Caco-2 (cell line): ENCODE measurements at regions of chr2 and their contacts with region 1.

Region 1: DNA sequence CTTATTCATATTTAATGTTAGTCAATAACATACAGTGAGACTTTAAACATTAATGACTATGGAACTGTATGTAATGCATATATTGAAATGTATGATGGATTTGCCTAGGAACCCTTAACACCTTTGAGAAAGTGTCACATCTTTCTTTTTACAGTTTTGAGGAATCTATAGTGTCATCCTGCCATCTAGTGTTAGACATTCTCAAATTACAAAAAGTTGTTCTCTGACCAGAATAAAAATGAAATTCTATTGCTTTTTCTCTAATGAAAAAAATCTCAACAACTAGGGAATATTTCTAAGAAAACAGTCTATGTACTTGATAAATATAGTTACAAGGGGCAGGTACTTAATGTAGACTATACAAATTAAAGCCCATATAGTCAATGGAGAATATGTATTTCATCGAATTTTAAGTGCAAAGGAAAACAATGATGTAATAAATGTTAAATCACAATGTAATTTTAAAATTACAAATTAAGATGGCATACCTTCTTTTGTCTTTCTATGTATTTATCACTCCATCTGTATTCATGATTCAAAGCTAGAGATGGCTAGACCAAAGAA is 5.1 kb upstream of the CALCRL start:
- DNase-seq: peak in 1 of 2 experiments; percentile 13
- H3K4me3 ChIP-seq: no peak overlapping the region
- H3K4me3 Mint-ChIP-seq: no peak overlapping the region
- H3K27ac Mint-ChIP-seq: no peak overlapping the region
- H3K4me1 ChIP-seq: no peaks in the 10 kb centered on the region
- H3K4me1 Mint-ChIP-seq: no peaks in the 10 kb centered on the region
- H3K27me3 ChIP-seq: no peaks in the 10 kb centered on the region; the same call in 1 of the 2 replicates
- H3K27me3 Mint-ChIP-seq: no peaks in the 10 kb centered on the region
- CTCF ChIP-seq: peak; percentile 25 to 39

Region 2: GRCh38 chr2:186862869-186863709 is 590.1 kb before region 1 on chr2:
- CTCF ChIA-PET with region 1: interaction called, 4 read pairs
- POLR2A ChIA-PET with region 1: no interaction called
- intact Hi-C with region 1: loop called (anchors 1 kb)
- DNase-seq: peak in 1 of 2 experiments; percentile 24
- H3K4me3 ChIP-seq: no peak overlapping the region
- H3K4me3 Mint-ChIP-seq: no peak overlapping the region
- H3K27ac Mint-ChIP-seq: no peak overlapping the region
- H3K4me1 ChIP-seq: no peaks in the 10 kb centered on the region
- H3K4me1 Mint-ChIP-seq: no peaks in the 10 kb centered on the region
- H3K27me3 ChIP-seq: no peaks in the 10 kb centered on the region
- H3K27me3 Mint-ChIP-seq: peaks cover 8% of the 10 kb centered on the region
- CTCF ChIP-seq: peak; percentile 54 to 73

Region 3: DNA sequence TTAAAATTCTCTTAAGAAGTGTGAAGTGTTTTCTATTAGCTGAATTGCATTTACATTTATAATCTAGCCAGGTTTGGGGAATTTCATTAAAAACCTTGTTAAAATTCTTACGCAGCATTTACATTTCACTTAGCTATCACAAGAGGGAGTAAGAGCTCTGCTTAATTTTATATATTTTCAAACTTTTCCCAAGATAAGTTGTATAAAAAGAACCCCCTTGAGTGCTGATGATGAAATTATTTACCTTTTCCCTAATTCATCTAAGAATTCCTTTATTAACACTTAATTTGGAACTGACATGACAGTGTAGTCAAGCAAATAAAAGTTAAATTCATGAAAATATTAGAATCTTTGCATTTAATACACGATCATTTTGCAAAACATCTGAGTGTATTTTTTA is 549.9 kb before region 1 on chr2:
- CTCF ChIA-PET with region 1: no interaction called
- POLR2A ChIA-PET with region 1: no interaction called
- intact Hi-C with region 1: loop called (anchors 1 kb)
- DNase-seq: no peak
- H3K4me3 ChIP-seq: no peak overlapping the region
- H3K4me3 Mint-ChIP-seq: no peak overlapping the region
- H3K27ac Mint-ChIP-seq: no peak overlapping the region
- H3K4me1 ChIP-seq: no peaks in the 10 kb centered on the region
- H3K4me1 Mint-ChIP-seq: no peaks in the 10 kb centered on the region
- H3K27me3 ChIP-seq: no peaks in the 10 kb centered on the region
- H3K27me3 Mint-ChIP-seq: peaks cover 8% of the 10 kb centered on the region
- CTCF ChIP-seq: peak; percentile 20 to 31

Region 4: DNA sequence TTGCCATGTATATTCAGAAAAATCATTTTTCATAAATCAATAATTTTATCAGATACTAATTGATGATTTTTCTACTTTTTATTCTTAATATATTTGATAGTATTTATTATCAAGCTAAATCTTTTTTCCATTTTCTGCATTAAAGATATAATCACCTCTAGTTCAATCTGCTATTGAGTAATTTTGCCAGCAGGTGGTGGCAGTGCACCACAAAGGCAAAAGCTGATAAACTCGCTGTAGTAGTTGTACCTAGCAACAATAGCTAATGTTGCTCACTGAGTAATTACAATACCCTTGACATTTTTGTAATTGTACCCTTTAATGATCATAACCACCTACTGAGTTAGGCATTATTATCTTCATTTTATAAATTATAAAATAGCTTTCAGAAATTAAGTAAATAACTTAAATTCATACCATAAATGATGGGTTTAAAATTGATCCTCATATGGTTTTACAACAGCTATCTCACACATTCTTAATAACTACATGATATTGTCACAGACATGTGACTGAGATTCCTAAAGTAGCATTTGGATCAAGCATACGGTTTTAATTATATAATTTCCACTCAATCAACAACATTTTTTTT is 46.9 kb after region 1 on chr2:
- CTCF ChIA-PET with region 1: no interaction called
- POLR2A ChIA-PET with region 1: no interaction called
- intact Hi-C with region 1: no loop called
- DNase-seq: peak; percentile 52 to 71
- H3K4me3 ChIP-seq: no peak overlapping the region
- H3K4me3 Mint-ChIP-seq: no peak overlapping the region
- H3K27ac Mint-ChIP-seq: no peak overlapping the region
- H3K4me1 ChIP-seq: peaks cover 7% of the 10 kb centered on the region; the same call in 1 of the 2 replicates
- H3K4me1 Mint-ChIP-seq: peaks cover 19% of the 10 kb centered on the region
- H3K27me3 ChIP-seq: no peaks in the 10 kb centered on the region
- H3K27me3 Mint-ChIP-seq: no peaks in the 10 kb centered on the region
- CTCF ChIP-seq: peak; percentile 80 to 91

Region 5: DNA sequence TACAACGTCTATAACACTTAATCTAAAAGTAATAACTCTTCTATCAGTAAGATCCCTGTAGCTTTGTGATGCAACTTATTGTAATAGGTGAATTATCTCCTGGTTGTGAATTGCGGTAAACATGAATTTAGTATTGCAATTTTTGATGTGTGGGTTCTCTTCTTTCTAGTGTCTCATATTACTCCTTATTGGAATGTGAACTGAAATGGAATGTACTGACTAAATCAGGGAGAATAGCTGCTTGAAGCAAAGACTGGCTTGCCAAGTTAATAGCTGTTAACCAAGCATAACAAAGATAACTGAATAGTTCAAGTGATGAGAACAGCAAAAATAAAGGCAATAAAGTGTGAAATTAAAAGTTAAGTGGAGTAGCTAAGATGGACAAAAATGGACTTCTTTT is 161.6 kb after region 1 on chr2:
- CTCF ChIA-PET with region 1: no interaction called
- POLR2A ChIA-PET with region 1: no interaction called
- intact Hi-C with region 1: no loop called
- DNase-seq: no peak
- H3K4me3 ChIP-seq: no peak overlapping the region
- H3K4me3 Mint-ChIP-seq: no peak overlapping the region
- H3K27ac Mint-ChIP-seq: no peak overlapping the region
- H3K4me1 ChIP-seq: no peaks in the 10 kb centered on the region
- H3K4me1 Mint-ChIP-seq: no peaks in the 10 kb centered on the region
- H3K27me3 ChIP-seq: no peaks in the 10 kb centered on the region
- H3K27me3 Mint-ChIP-seq: peaks cover 5% of the 10 kb centered on the region
- CTCF ChIP-seq: no peak